H1 (cell line): ENCODE measurements at regions of chr20 and their contacts with region 1.

Region 1: GRCh38 chr20:24160563-24161375 is 172.2 kb upstream of the GGTLC1 start:
- DNase-seq: peak in 1 of 2 experiments; percentile 65
- H3K4me3 ChIP-seq: no peak overlapping the region
- H3K27ac ChIP-seq: no peak overlapping the region
- H3K4me1 ChIP-seq: peaks cover 0 to 2% (median 0%) of the 10 kb centered on the region in 4 experiments; a peak in 1 of 7 replicates
- H3K27me3 ChIP-seq: peaks cover 0 to 1% (median 0%) of the 10 kb centered on the region in 4 experiments; a peak in 2 of 7 replicates
- CTCF ChIP-seq: peak; percentile 72 to 93 (median 86)
- EP300 ChIP-seq: no peak
- POLR2A ChIP-seq: no peak
- RAD21 ChIP-seq: peak; percentile 69 to 72

Region 2: DNA sequence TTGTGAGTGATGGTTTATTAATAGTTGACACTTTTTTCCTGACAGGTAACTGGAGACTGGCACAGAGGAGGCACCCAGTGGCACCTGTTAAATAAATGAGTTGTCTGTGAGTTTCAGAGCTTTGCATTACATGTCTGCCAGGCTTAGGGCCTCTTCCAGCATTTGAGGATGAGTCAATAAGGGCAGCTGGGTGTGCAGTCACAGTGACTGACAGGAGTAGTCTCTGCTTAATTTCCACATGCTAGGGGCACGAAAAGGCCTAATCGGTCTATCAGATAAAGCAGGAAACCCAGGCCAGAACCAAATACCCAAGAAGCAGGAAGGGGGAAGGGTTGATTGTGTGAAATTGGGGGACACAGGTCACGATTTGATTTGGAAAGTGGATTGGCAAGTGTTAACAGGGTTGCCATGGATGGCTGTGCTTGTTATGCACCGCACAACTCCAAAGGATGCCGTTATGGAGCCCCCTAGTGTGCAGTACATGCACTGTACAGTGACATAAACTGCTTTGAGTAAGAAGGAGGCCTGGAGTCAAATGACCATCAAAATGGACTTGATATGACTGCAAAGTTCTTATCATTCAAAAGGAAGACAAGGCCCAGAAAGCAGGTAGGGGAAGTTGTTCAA is 60.3 kb before region 1 on chr20:
- CTCF ChIA-PET with region 1: interaction called, 38 read pairs
- POLR2A ChIA-PET with region 1: no interaction called
- DNase-seq: no peak
- H3K4me3 ChIP-seq: no peak overlapping the region
- H3K27ac ChIP-seq: no peak overlapping the region
- H3K4me1 ChIP-seq: no peaks in the 10 kb centered on the region
- H3K27me3 ChIP-seq: 0 out of 7 replicates have a peak, but pooled peaks cover 0 to 2% (median 0%) of the 10 kb centered on the region in 4 experiments
- CTCF ChIP-seq: peak; percentile 41 to 77 (median 66)
- EP300 ChIP-seq: no peak
- POLR2A ChIP-seq: no peak
- RAD21 ChIP-seq: peak; percentile 59 to 72

Region 3: DNA sequence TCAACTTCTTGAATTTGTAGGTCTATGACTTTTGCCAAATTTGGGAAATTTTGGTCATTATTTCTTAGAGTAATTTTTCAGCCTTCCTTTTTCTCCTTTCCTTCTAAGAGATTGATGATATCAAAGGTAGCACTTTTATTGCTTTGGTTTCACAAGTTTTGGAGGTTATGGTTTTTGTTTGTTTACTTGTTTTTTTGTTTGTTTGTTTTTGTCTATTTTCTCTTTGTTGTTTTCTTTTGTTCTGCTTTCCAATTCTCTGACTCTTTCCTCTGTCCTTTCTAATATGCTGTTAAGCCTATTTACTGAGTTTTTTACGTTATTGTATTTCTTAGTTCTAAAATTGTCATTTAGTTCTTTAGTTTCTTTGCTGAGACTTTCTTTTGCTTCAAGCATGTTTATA is 12.4 kb after region 1 on chr20:
- CTCF ChIA-PET with region 1: interaction called, 11 read pairs
- POLR2A ChIA-PET with region 1: no interaction called
- DNase-seq: no peak
- H3K4me3 ChIP-seq: no peak overlapping the region
- H3K27ac ChIP-seq: no peak overlapping the region
- H3K4me1 ChIP-seq: no peaks in the 10 kb centered on the region
- H3K27me3 ChIP-seq: no peaks in the 10 kb centered on the region
- CTCF ChIP-seq: no peak
- EP300 ChIP-seq: no peak
- POLR2A ChIP-seq: no peak
- RAD21 ChIP-seq: no peak

Region 4: GRCh38 chr20:24208614-24209013 is 47.8 kb after region 1 on chr20:
- CTCF ChIA-PET with region 1: interaction called, 14 read pairs
- POLR2A ChIA-PET with region 1: no interaction called
- DNase-seq: peak in 1 of 2 experiments; percentile 55
- H3K4me3 ChIP-seq: no peak overlapping the region
- H3K27ac ChIP-seq: no peak overlapping the region
- H3K4me1 ChIP-seq: peaks cover 0 to 18% (median 5%) of the 10 kb centered on the region in 4 experiments; a peak in 5 of 7 replicates
- H3K27me3 ChIP-seq: no peaks in the 10 kb centered on the region
- CTCF ChIP-seq: peak; percentile 28 to 94 (median 68)
- EP300 ChIP-seq: no peak
- POLR2A ChIP-seq: no peak
- RAD21 ChIP-seq: peak; percentile 52 to 60

Region 5: DNA sequence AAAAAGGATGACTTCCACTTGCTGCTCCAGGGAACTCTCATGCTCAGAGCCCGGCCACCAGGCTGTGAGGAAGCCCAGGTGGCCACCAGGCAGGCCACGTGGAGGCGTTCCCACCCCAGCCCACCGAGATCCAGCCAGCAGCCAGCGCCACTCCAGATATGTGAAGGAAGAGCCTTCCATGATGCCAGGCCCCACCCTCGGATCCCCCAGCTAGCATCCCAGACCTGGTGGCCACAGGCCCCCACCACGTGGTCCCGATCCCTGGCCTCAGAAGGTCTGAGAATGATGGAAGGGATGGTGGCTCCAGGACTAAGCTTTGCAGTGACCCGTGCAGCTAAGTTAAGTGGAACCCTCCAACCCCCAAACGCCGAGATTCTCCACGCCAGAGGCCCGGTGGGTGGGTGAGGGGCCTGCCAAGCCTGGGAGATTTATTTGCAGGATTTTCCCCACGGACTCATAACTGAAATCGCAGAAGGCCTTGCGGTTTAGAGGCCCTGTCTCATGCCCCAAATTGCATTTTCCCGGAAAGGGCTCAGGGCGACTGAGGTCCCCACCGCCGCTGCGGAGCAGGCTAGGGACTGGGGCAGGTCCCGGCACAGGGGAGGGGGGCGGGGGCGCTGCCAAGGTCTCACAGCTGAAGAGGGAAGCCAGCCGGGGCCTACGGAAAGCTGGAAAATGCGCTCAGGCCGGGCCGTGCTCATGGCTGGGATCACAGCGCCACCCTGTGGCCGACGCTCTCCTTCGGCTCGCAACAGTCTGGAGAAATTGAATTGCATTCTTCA is 757.2 kb after region 1 on chr20:
- CTCF ChIA-PET with region 1: interaction called, 17 read pairs
- POLR2A ChIA-PET with region 1: no interaction called
- DNase-seq: peak; percentile 67 to 88
- H3K4me3 ChIP-seq: no peak overlapping the region
- H3K27ac ChIP-seq: no peak overlapping the region
- H3K4me1 ChIP-seq: no peaks in the 10 kb centered on the region
- H3K27me3 ChIP-seq: no peaks in the 10 kb centered on the region; a peak in 1 of 7 replicates
- CTCF ChIP-seq: peak; percentile 84 to 91 (median 89)
- EP300 ChIP-seq: no peak
- POLR2A ChIP-seq: no peak
- RAD21 ChIP-seq: peak; percentile 96 to 97